MCF 10A (cell line): ENCODE measurements at regions of chr14 and their contacts with region 1.

Region 1: GRCh38 chr14:75654127-75654732 is 6.4 kb downstream of the ERG28 start:
- DNase-seq: peak; percentile 76
- H3K4me3 Mint-ChIP-seq: no peak overlapping the region
- H3K27ac Mint-ChIP-seq: no peak overlapping the region
- H3K4me1 Mint-ChIP-seq: peaks cover 16% of the 10 kb centered on the region
- H3K27me3 Mint-ChIP-seq: no peaks in the 10 kb centered on the region
- CTCF ChIP-seq: peak; percentile 93

Region 2: GRCh38 chr14:75642056-75642455 is 12.2 kb before region 1 on chr14:
- CTCF ChIA-PET with region 1: interaction called, 13 read pairs
- POLR2A ChIA-PET with region 1: interaction called, 76 read pairs
- intact Hi-C with region 1: no loop called
- DNase-seq: no peak
- H3K4me3 Mint-ChIP-seq: no peak overlapping the region
- H3K27ac Mint-ChIP-seq: no peak overlapping the region
- H3K4me1 Mint-ChIP-seq: peaks cover 15% of the 10 kb centered on the region
- H3K27me3 Mint-ChIP-seq: no peaks in the 10 kb centered on the region
- CTCF ChIP-seq: no peak

Region 3: GRCh38 chr14:76146976-76147375 is 492.7 kb after region 1 on chr14:
- CTCF ChIA-PET with region 1: no interaction called
- POLR2A ChIA-PET with region 1: no interaction called
- intact Hi-C with region 1: no loop called
- DNase-seq: no peak
- H3K4me3 Mint-ChIP-seq: no peak overlapping the region
- H3K27ac Mint-ChIP-seq: no peak overlapping the region
- H3K4me1 Mint-ChIP-seq: peaks cover 8% of the 10 kb centered on the region
- H3K27me3 Mint-ChIP-seq: peaks cover 4% of the 10 kb centered on the region
- CTCF ChIP-seq: no peak